Activated naive CD4-positive, alpha-beta T cell treated with anti-CD3 and anti-CD28 coated beads, Interleukin-2, amount 10 ng/mL, durations not matched to agents 7 days and 5 days (primary cell): ENCODE measurements at regions of chr19 and their contacts with region 1.

Region 1: DNA sequence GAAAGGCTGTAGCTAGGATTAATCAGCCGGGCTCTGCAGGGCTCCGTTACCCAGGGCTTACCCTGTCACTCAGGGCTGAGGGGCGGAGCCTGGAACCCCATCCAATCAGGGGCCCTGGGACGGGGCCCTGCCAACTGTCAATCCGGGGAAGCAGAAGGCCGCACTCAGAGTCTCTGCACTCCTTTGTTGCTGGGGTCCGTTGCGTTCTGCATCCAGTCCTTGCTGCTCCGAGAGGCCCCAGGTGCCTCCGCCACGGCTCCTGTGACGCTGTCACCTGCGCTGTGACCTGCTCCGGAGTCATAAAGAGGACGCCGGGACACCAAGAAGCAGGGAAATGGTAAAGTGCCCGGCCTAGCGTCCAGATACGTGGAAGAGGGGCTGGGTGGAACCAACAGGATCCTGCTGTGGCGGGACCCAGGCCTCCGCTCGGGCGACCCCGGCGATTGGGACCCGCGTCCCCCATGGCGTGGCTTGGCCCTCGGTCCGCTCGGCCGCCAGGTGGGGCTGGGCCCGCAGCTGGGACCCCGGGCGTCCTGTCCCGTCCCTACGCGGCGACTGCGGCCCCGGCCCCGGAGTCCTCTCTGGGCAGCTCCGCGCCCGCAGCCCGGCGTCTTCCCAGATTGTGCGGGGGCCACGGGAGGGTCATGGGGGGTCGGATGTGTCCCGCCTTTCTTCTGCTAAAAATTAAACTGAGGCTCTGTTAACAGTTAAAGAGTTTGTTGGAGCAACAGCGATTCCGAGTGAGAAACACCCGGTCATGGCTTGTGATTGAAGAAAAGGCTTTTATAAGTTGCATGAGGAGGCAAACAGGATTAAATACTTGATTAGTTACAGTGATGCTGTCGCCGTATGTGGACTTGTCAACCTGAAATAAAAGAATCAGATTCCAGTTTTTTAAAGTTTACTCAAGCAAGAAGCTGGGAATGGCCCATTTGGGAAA is at the start of gene ZNF491:
- DNase-seq: peak; percentile 90
- H3K4me3 Mint-ChIP-seq: peak within 1 kb of the TSS; percentile 84
- H3K27ac Mint-ChIP-seq: peak within 1 kb of the TSS; percentile 76
- H3K4me1 Mint-ChIP-seq: peaks cover 17% of the 10 kb centered on the region
- H3K27me3 Mint-ChIP-seq: peaks cover 21% of the 10 kb centered on the region

Region 2: DNA sequence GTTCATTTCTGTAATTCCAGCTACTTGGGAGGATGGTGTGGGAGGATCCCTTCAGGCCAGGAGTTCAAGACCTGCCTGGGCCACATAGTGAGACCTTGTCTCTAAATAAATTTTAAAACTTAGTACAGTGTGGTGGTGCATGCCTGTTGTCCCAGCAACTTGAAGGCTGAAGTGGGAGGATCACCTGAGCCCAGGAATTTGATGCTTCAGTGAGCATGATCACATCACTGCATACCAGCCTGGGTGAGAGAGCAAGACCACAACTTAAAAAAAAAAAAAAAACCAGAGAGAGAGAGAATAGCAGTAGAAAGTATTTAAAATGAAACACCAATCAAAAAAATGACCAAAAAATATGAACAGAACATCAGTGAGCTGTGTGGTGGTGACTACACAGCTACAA is 52.8 kb before region 1 on chr19:
- CTCF ChIA-PET with region 1: no interaction called
- DNase-seq: no peak
- H3K4me3 Mint-ChIP-seq: no peak overlapping the region
- H3K27ac Mint-ChIP-seq: no peak overlapping the region
- H3K4me1 Mint-ChIP-seq: no peaks in the 10 kb centered on the region
- H3K27me3 Mint-ChIP-seq: no peaks in the 10 kb centered on the region

Region 3: GRCh38 chr19:11814029-11814699 is 15.5 kb after region 1 on chr19 and contains the start of gene ZNF440:
- CTCF ChIA-PET with region 1: interaction called, 22 read pairs
- DNase-seq: peak; percentile 94
- H3K4me3 Mint-ChIP-seq: peak within 1 kb of the TSS; percentile 80
- H3K27ac Mint-ChIP-seq: peak within 1 kb of the TSS; percentile 68
- H3K4me1 Mint-ChIP-seq: peaks cover 26% of the 10 kb centered on the region
- H3K27me3 Mint-ChIP-seq: no peaks in the 10 kb centered on the region

Region 4: GRCh38 chr19:11881151-11881800 is 82.6 kb after region 1 on chr19:
- CTCF ChIA-PET with region 1: interaction called, 22 read pairs
- DNase-seq: peak; percentile 75
- H3K4me3 Mint-ChIP-seq: no peak overlapping the region
- H3K27ac Mint-ChIP-seq: no peak overlapping the region
- H3K4me1 Mint-ChIP-seq: peaks cover 2% of the 10 kb centered on the region
- H3K27me3 Mint-ChIP-seq: no peaks in the 10 kb centered on the region

Region 5: GRCh38 chr19:11973020-11973810 is 174.6 kb after region 1 on chr19:
- CTCF ChIA-PET with region 1: no interaction called
- DNase-seq: no peak
- H3K4me3 Mint-ChIP-seq: no peak overlapping the region
- H3K27ac Mint-ChIP-seq: no peak overlapping the region
- H3K4me1 Mint-ChIP-seq: no peaks in the 10 kb centered on the region
- H3K27me3 Mint-ChIP-seq: no peaks in the 10 kb centered on the region

Region 6: GRCh38 chr19:11987405-11988281 is 189.0 kb after region 1 on chr19:
- CTCF ChIA-PET with region 1: interaction called, 13 read pairs
- DNase-seq: peak; percentile 97
- H3K4me3 Mint-ChIP-seq: peak overlapping the region; percentile 95
- H3K27ac Mint-ChIP-seq: peak overlapping the region; percentile 94
- H3K4me1 Mint-ChIP-seq: peaks cover 16% of the 10 kb centered on the region
- H3K27me3 Mint-ChIP-seq: peaks cover 4% of the 10 kb centered on the region